Naive thymus-derived CD4-positive, alpha-beta T cell (primary cell): ENCODE measurements at regions of chr2 and their contacts with region 1.

Region 1: DNA sequence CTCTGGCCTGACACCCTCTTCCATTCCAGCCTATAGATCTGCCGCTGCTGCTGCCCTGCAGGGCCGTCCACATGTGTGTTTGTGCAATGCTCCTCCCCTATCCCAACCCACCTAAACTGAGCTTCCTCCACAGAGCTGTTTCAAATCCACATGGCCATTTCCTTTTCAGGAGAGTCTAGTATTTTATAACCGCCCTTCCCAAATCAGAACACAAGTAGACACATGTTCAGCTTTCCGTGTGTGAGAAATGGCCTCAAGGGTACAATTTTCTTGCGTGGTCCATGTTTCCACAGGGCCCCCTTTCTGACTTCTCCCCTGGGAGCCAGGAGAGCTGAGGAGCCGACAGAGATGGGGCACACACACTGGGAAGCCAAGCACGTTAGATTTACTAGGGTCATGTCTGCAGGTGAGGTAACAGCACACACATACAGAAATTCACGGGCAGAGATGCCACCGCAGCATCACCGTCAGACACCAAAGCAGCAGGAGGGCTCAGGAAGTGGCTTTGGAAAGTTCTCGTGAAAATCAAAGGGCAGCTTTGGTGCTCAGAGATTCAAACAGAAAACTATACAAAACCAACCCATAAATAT is 102.9 kb upstream of the TGFA start:
- DNase-seq: peak in 7 of 9 donors; percentile 67 to 84 (median 80)
- ATAC-seq: peak; percentile 86
- H3K4me3 ChIP-seq: no peak overlapping the region
- H3K4me3 Mint-ChIP-seq: peak overlapping the region in 9 of 10 donors; percentile 12 to 73 (median 59)
- H3K27ac ChIP-seq: peak overlapping the region; percentile 63
- H3K27ac Mint-ChIP-seq: peak overlapping the region in 8 of 9 donors; percentile 64 to 96 (median 88)
- H3K4me1 ChIP-seq: peaks cover 0 to 29% of the 10 kb centered on the region in 2 donors
- H3K4me1 Mint-ChIP-seq: peaks cover 11 to 52% (median 37%) of the 10 kb centered on the region in 7 donors
- H3K27me3 ChIP-seq: no peaks in the 10 kb centered on the region
- H3K27me3 Mint-ChIP-seq: peaks cover 0 to 26% (median 22%) of the 10 kb centered on the region in 5 donors

Region 2: DNA sequence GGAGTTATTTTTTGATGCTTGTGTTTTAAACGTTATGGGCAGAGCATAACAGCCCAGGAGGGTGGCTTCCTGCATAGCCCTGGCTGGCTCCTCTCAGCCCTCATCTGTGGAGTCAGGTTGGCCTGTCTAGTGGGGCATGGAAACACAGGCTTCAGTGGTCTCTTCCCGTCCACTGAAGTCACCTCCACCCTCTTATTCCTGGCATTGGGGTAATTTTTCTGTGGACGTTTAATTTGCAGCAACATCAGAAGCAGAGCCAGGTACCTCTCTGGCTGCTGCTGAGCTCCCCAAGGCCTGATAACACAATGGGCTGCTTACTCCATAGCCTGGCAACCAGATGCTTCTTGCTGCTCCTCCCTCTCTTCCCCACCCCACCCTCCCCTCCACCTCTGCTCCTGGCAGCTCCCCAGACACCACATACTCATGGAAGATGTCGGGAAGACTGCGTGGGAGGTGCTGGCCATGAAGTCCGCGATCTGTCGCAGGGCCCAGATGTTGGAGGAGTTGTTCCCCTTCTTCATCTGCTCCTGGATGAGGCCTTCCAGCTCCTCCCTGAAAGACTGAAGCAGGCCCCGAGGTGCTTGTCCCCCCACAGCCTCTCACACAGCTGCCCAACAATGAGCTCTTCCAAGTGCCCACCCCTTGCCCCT is 47.5 kb after region 1 on chr2:
- CTCF ChIA-PET with region 1: no interaction called
- POLR2A ChIA-PET with region 1: interaction called, 3 read pairs
- intact Hi-C with region 1: loop called in 1 of 2 experiments (anchors 5 kb)
- DNase-seq: peak in 1 of 9 donors; percentile 6
- ATAC-seq: no peak
- H3K4me3 ChIP-seq: no peak overlapping the region
- H3K4me3 Mint-ChIP-seq: no peak overlapping the region
- H3K27ac ChIP-seq: no peak overlapping the region
- H3K27ac Mint-ChIP-seq: peak overlapping the region in 1 of 9 donors; percentile 56
- H3K4me1 ChIP-seq: no peaks in the 10 kb centered on the region
- H3K4me1 Mint-ChIP-seq: no peaks in the 10 kb centered on the region
- H3K27me3 ChIP-seq: no peaks in the 10 kb centered on the region
- H3K27me3 Mint-ChIP-seq: peaks cover 0 to 6% (median 0%) of the 10 kb centered on the region in 5 donors

Region 3: DNA sequence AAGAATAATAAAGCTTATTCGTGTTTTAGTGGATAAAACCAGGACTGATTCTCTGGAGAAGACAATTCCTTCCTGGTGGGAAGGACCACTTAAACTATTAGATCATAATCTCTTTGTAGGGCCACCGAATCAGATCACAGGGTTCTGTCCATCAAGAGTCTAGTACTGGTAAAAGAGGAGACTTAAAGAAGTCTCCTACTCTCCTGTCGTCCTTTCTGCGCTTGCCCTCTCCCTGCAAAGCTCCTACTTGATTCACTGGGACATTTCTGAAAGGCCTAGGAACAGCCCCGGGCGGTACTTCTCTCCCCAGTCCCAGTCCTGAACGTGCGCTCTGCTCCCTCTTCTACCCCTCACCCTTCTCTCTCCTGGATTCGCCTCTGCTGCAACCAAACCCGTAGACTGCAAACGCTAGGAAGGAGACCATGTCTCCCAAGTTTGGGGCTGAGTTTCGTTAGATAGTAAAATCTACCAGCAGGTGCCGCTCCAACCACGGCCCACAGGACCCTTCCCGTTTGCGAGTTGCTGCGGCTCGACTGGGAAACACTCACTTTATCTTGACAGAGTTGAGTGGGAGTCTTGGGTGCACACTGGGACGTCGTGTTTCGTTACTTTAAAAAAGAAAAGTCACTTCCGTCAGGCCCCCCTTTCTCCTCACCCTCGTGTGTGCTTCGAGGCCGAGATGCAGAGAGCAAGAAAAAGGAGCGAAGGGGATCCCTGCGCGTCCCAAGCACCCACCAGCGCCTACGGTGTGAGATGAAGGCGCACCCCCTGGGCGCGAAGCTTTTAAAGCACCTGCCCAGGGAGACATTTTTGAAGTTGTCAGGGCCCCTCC is 133.0 kb after region 1 on chr2:
- CTCF ChIA-PET with region 1: interaction called, 45 read pairs
- POLR2A ChIA-PET with region 1: no interaction called
- intact Hi-C with region 1: loop called (anchors 1 kb)
- DNase-seq: peak; percentile 44 to 70 (median 67)
- ATAC-seq: peak; percentile 81
- H3K4me3 ChIP-seq: peak overlapping the region; percentile 43
- H3K4me3 Mint-ChIP-seq: peak overlapping the region; percentile 79 to 93 (median 86)
- H3K27ac ChIP-seq: no peak overlapping the region
- H3K27ac Mint-ChIP-seq: peak overlapping the region in 1 of 9 donors; percentile 69
- H3K4me1 ChIP-seq: no peaks in the 10 kb centered on the region
- H3K4me1 Mint-ChIP-seq: peaks cover 9 to 22% (median 12%) of the 10 kb centered on the region in 7 donors
- H3K27me3 ChIP-seq: peaks cover 0 to 5% of the 10 kb centered on the region in 2 donors
- H3K27me3 Mint-ChIP-seq: peaks cover 41 to 70% (median 47%) of the 10 kb centered on the region in 5 donors

Region 4: DNA sequence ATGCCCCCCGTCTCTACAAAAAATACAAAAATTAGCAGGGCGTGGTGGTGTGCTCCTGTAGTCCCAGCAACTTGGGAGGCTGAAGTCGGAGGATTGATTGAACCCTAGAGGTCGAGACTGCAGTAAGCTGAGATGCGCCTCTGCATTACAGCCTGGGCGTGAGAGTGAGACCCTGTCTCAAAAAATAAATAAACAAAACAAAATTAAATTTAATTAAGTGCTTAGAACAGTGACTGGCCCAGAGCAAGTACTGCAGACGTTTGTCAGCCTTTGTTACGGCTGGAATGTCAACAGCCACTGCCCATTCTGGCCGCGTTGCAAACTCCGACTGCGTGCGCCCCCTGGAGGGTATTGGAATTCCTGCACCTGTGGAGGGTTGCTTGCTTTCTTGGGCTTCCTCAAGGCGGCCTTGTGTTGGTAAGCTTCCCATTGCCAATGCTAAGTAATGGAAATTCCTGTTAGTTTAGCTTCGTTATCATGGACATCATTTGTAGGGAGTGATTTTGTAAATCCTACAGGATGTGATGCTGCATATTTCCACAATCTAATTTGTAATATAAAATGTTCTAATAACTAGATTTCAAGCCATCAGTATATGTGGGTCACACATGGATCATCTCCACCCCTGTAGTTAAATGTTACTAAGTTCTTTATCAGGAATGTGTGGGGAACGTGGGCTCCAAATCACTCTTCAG is 263.3 kb after region 1 on chr2:
- CTCF ChIA-PET with region 1: interaction called, 8 read pairs
- POLR2A ChIA-PET with region 1: no interaction called
- intact Hi-C with region 1: loop called in 1 of 2 experiments (anchors 1 kb)
- DNase-seq: peak; percentile 28 to 78 (median 61)
- ATAC-seq: peak; percentile 86
- H3K4me3 ChIP-seq: no peak overlapping the region
- H3K4me3 Mint-ChIP-seq: no peak overlapping the region
- H3K27ac ChIP-seq: no peak overlapping the region
- H3K27ac Mint-ChIP-seq: no peak overlapping the region
- H3K4me1 ChIP-seq: no peaks in the 10 kb centered on the region
- H3K4me1 Mint-ChIP-seq: no peaks in the 10 kb centered on the region
- H3K27me3 ChIP-seq: no peaks in the 10 kb centered on the region
- H3K27me3 Mint-ChIP-seq: peaks cover 25 to 43% (median 27%) of the 10 kb centered on the region in 5 donors